Activated B cell treated with CpG ODN at 0.5 μM for 24 hours (primary cell): ENCODE measurements at regions of chr19 and their contacts with region 1.

Region 1: GRCh38 chr19:58408152-58409009 is at the start of gene ZNF584:
- DNase-seq: peak; percentile 93
- ATAC-seq: peak; percentile 95
- H3K4me3 Mint-ChIP-seq: peak within 1 kb of the TSS; percentile 95
- H3K27ac Mint-ChIP-seq: peak within 1 kb of the TSS; percentile 92
- H3K4me1 Mint-ChIP-seq: peaks cover 32% of the 10 kb centered on the region
- H3K27me3 Mint-ChIP-seq: no peaks in the 10 kb centered on the region
- CTCF ChIP-seq: no peak
- total RNA-seq, gene ZNF584: 8.6 and 9.6 TPM in 2 replicates

Region 2: DNA sequence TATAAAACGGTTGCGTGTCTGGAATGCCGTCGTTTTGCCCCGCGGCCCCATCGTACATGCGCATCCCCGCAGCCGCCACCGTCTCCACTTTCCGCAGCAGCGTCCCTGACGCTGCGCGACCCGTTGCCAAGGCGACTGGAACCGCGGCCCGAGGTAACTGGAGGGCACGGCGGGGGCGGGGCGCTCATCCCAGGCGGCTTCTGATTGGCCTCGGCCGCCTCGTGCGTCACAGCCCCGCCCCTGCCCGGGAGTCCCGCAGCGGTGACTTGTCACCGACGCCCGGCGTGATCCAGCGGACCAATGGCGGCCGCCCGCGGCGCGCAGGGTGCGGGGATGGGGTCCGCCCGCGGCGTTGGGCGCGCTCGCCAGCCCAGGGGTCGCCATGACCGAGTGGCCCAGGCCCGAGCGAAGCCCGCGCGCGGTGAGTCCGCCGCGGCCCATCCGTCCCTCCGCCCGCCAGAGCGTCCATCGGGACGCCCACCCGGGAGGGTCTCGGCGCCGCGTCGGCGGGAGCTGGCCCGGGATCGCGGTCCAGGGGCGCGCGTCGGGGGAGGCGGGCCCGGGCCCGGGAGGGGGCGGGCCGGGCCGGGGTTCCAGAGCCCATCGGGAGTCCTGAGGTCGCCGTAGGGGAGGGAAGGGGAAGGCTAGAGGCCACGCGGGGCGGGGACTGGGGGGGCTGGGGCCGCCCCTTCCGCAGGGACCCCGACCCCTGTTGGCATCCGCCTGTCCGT is 374.5 kb before region 1 on chr19 and contains the start of gene ZSCAN1:
- CTCF ChIA-PET with region 1: no interaction called
- POLR2A ChIA-PET with region 1: no interaction called
- intact Hi-C with region 1: no loop called
- DNase-seq: peak; percentile 33
- ATAC-seq: peak; percentile 94
- H3K4me3 Mint-ChIP-seq: peak within 1 kb of the TSS; percentile 54
- H3K27ac Mint-ChIP-seq: no peak within 1 kb of the TSS
- H3K4me1 Mint-ChIP-seq: no peaks in the 10 kb centered on the region
- H3K27me3 Mint-ChIP-seq: peaks cover 25% of the 10 kb centered on the region
- CTCF ChIP-seq: no peak
- total RNA-seq, gene ZSCAN1: not detected in 2 replicates

Region 3: DNA sequence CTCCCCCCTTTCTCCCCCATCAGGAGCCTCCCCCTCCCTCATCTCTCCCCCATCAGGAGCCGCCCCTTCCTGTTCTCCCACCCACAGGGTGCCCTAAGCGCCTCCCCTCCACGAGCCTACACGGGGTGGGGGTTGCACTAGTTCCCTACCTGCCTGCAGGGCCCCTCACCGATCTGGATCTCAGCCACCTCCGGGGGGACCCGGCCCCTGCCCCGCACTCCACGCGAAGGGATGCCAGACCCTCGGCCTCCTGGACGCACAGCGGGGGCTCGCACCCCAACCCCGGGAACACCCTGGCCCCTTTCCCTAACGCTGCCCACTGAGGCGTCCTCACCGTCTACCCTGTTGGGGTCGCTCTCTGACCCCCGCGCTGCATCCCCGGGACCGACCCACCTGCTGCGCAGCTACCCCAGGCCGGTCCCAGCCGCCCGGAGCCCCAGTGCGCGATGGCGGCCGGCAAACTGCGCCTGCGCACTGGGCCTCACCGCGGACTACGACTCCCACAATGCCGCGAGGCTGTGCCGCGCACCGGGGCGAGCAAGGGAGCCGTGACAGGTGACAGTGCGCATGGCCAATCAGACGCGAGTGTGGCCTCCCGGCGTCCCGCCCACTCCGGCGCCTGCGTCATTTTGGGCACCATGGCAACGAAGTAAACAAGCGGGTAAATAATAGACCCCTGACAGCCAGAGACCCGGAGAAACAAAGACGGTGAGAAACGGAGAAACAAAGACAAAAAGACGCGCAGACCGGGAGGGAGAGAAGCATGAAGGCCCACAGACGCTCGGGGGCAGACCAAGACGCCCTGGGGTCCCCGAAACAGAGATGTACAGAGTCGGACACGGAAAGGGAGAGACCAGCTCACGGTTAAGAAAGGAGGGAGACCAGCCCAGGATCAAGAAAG is 310.4 kb before region 1 on chr19 and contains the start of gene ZSCAN18:
- CTCF ChIA-PET with region 1: no interaction called
- POLR2A ChIA-PET with region 1: no interaction called
- intact Hi-C with region 1: loop called (anchors 10 kb)
- DNase-seq: peak; percentile 98
- ATAC-seq: peak; percentile 93
- H3K4me3 Mint-ChIP-seq: peak within 1 kb of the TSS; percentile 90
- H3K27ac Mint-ChIP-seq: peak within 1 kb of the TSS; percentile 100
- H3K4me1 Mint-ChIP-seq: peaks cover 18% of the 10 kb centered on the region
- H3K27me3 Mint-ChIP-seq: no peaks in the 10 kb centered on the region
- CTCF ChIP-seq: no peak
- total RNA-seq, gene ZSCAN18: 40.8 and 49.8 TPM in 2 replicates

Region 4: GRCh38 chr19:58284199-58284598 is 124.2 kb before region 1 on chr19:
- CTCF ChIA-PET with region 1: no interaction called
- POLR2A ChIA-PET with region 1: no interaction called
- intact Hi-C with region 1: no loop called
- DNase-seq: no peak
- ATAC-seq: no peak
- H3K4me3 Mint-ChIP-seq: no peak overlapping the region
- H3K27ac Mint-ChIP-seq: no peak overlapping the region
- H3K4me1 Mint-ChIP-seq: peaks cover 26% of the 10 kb centered on the region
- H3K27me3 Mint-ChIP-seq: no peaks in the 10 kb centered on the region
- CTCF ChIP-seq: no peak

Region 5: DNA sequence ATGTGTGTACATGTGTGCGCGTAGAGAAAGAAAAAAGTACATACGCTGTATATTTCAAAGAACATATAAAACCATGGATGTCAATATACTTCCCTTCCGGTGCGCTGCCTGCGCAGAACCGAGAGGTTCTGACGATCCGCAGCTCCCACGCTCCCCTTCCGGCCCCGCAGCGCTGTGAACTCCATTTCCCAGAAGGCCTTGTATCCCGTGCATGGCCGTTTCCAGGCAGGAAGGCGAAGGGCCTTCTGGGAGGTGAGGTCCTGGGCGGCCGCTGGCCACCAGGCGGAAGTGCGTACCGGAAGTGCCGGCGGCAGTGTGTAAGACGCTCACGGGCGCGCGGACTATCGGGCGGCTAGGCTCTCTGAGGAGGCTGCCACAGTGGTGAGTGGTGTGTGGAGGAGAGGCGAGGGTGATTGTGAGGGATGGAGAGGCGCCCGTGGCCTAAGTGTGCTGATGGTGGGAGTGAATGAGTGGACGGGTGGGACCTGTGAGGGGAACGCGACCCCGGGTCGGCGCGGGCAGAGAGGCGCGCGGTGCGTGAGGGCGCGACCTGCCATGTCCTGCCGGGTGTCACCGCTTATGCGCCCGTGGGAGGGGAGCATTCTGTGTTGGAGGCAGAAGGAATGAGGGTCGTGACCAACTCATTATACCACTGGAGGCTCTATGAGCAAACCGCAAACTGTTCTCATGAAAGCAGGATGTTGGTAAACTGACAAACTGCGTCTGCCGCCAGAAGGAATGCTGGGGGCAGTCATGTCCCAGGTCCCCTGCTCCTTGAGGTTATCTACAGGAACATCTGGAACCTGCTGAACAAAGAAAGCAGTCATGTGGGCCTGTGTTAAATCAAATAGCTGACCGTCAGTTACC is 103.1 kb before region 1 on chr19 and contains the start of gene ERVK3-1:
- CTCF ChIA-PET with region 1: no interaction called
- POLR2A ChIA-PET with region 1: no interaction called
- intact Hi-C with region 1: loop called (anchors 1 kb)
- DNase-seq: peak; percentile 89
- ATAC-seq: peak; percentile 97
- H3K4me3 Mint-ChIP-seq: peak within 1 kb of the TSS; percentile 100
- H3K27ac Mint-ChIP-seq: peak within 1 kb of the TSS; percentile 98
- H3K4me1 Mint-ChIP-seq: peaks cover 38% of the 10 kb centered on the region
- H3K27me3 Mint-ChIP-seq: no peaks in the 10 kb centered on the region
- CTCF ChIP-seq: no peak
- total RNA-seq, gene ERVK3-1: 61.4 and 74.3 TPM in 2 replicates

Region 6: GRCh38 chr19:58380722-58381466 is 27.5 kb before region 1 on chr19 and contains the start of gene ZNF837:
- CTCF ChIA-PET with region 1: no interaction called
- POLR2A ChIA-PET with region 1: interaction called, 10 read pairs
- intact Hi-C with region 1: loop called (anchors 1 kb)
- DNase-seq: peak; percentile 96
- ATAC-seq: peak; percentile 86
- H3K4me3 Mint-ChIP-seq: peak within 1 kb of the TSS; percentile 83
- H3K27ac Mint-ChIP-seq: peak within 1 kb of the TSS; percentile 87
- H3K4me1 Mint-ChIP-seq: peaks cover 37% of the 10 kb centered on the region
- H3K27me3 Mint-ChIP-seq: no peaks in the 10 kb centered on the region
- CTCF ChIP-seq: no peak
- total RNA-seq, gene ZNF837: 3.1 and 3.5 TPM in 2 replicates

Region 7: GRCh38 chr19:58451358-58452101 is 43.1 kb after region 1 on chr19 and contains the start of gene ZNF324B:
- CTCF ChIA-PET with region 1: no interaction called
- POLR2A ChIA-PET with region 1: interaction called, 5 read pairs
- intact Hi-C with region 1: loop called (anchors 1 kb)
- DNase-seq: peak; percentile 94
- ATAC-seq: peak; percentile 98
- H3K4me3 Mint-ChIP-seq: peak within 1 kb of the TSS; percentile 86
- H3K27ac Mint-ChIP-seq: peak within 1 kb of the TSS; percentile 79
- H3K4me1 Mint-ChIP-seq: peaks cover 16% of the 10 kb centered on the region
- H3K27me3 Mint-ChIP-seq: peaks cover 15% of the 10 kb centered on the region
- CTCF ChIP-seq: no peak
- total RNA-seq, gene ZNF324B: 11.1 and 11.7 TPM in 2 replicates

Region 8: DNA sequence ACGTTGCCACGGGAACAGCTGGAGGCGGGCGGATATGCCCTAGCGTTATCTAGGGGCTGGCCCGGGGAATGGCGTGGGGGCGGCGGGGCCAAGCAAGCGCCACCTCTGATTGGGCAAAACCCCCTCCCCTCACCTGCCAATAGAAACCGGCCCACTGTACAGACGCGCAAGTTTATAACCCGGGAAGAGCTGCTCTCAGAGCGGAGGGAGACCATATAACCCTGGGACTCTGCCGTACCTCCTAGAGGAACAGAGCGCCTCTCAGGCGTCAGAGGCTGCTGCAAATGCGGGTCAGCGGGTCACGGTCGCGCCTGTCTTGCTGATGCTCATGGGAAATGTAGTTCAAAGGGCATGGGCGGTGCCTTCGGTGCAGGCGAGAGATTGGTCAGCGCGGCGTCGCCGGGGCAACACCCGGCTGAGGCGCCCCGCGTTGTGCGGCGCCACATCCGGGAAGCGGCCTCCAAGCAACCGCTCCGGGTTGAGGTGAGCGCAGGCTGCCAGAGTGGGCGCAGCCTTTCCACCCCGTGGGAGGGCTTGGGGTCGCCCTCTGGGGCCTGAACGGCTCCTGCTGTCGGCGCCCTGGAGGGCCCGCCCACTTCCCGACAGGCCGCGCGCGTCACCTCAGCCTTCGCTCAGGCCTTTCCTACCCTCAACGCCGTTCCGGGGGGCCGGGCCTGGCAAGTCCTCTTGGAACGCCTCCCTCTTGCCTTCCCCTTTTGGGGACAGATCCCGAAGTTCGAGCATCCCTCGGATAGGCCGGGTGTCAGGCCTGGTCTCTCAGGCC is 67.5 kb after region 1 on chr19 and contains the start of gene ZNF446:
- CTCF ChIA-PET with region 1: no interaction called
- POLR2A ChIA-PET with region 1: no interaction called
- intact Hi-C with region 1: loop called (anchors 1 kb)
- DNase-seq: peak; percentile 91
- ATAC-seq: peak; percentile 88
- H3K4me3 Mint-ChIP-seq: peak within 1 kb of the TSS; percentile 94
- H3K27ac Mint-ChIP-seq: peak within 1 kb of the TSS; percentile 95
- H3K4me1 Mint-ChIP-seq: peaks cover 20% of the 10 kb centered on the region
- H3K27me3 Mint-ChIP-seq: no peaks in the 10 kb centered on the region
- CTCF ChIP-seq: no peak
- total RNA-seq, gene ZNF446: 9.6 and 10.4 TPM in 2 replicates

Region 9: GRCh38 chr19:58531034-58531840 is 122.9 kb after region 1 on chr19:
- CTCF ChIA-PET with region 1: no interaction called
- POLR2A ChIA-PET with region 1: no interaction called
- intact Hi-C with region 1: no loop called
- DNase-seq: no peak
- ATAC-seq: peak; percentile 31
- H3K4me3 Mint-ChIP-seq: no peak overlapping the region
- H3K27ac Mint-ChIP-seq: no peak overlapping the region
- H3K4me1 Mint-ChIP-seq: peaks cover 25% of the 10 kb centered on the region
- H3K27me3 Mint-ChIP-seq: no peaks in the 10 kb centered on the region
- CTCF ChIP-seq: no peak